Mammary epithelial cell (primary cell): ENCODE measurements at regions of chr9 and their contacts with region 1.

Region 1: GRCh38 chr9:130042833-130043653 is at the start of gene FNBP1:
- DNase-seq: peak; percentile 69
- H3K4me3 ChIP-seq: peak within 1 kb of the TSS; percentile 79 to 88 (median 86)
- H3K27ac ChIP-seq: peak within 1 kb of the TSS; percentile 34
- H3K4me1 ChIP-seq: peaks cover 4% of the 10 kb centered on the region
- H3K27me3 ChIP-seq: no peaks in the 10 kb centered on the region
- CTCF ChIP-seq: peak in 1 of 2 donors; percentile 8
- total RNA-seq, gene FNBP1: 11.5 to 21.5 TPM

Region 2: GRCh38 chr9:129962889-129963703 is 79.9 kb before region 1 on chr9:
- CTCF ChIA-PET with region 1: no interaction called
- dilution Hi-C with region 1: no loop called
- in situ Hi-C with region 1: no loop called
- intact Hi-C with region 1: loop called (anchors 2 kb)
- DNase-seq: peak; percentile 57
- H3K4me3 ChIP-seq: peak overlapping the region; percentile 53 to 81 (median 60)
- H3K27ac ChIP-seq: peak overlapping the region; percentile 74
- H3K4me1 ChIP-seq: peaks cover 11% of the 10 kb centered on the region
- H3K27me3 ChIP-seq: no peaks in the 10 kb centered on the region
- CTCF ChIP-seq: no peak

Region 3: GRCh38 chr9:129995409-129996160 is 47.5 kb before region 1 on chr9:
- CTCF ChIA-PET with region 1: no interaction called
- dilution Hi-C with region 1: no loop called
- in situ Hi-C with region 1: no loop called
- intact Hi-C with region 1: loop called (anchors 5 kb)
- DNase-seq: peak; percentile 76
- H3K4me3 ChIP-seq: no peak overlapping the region
- H3K27ac ChIP-seq: no peak overlapping the region
- H3K4me1 ChIP-seq: peaks cover 11% of the 10 kb centered on the region
- H3K27me3 ChIP-seq: no peaks in the 10 kb centered on the region
- CTCF ChIP-seq: no peak

Region 4: GRCh38 chr9:130382636-130383349 is 339.8 kb after region 1 on chr9:
- CTCF ChIA-PET with region 1: no interaction called
- dilution Hi-C with region 1: no loop called
- in situ Hi-C with region 1: no loop called
- intact Hi-C with region 1: no loop called
- DNase-seq: no peak
- H3K4me3 ChIP-seq: no peak overlapping the region
- H3K27ac ChIP-seq: no peak overlapping the region
- H3K4me1 ChIP-seq: no peaks in the 10 kb centered on the region
- H3K27me3 ChIP-seq: no peaks in the 10 kb centered on the region
- CTCF ChIP-seq: no peak

Region 5: DNA sequence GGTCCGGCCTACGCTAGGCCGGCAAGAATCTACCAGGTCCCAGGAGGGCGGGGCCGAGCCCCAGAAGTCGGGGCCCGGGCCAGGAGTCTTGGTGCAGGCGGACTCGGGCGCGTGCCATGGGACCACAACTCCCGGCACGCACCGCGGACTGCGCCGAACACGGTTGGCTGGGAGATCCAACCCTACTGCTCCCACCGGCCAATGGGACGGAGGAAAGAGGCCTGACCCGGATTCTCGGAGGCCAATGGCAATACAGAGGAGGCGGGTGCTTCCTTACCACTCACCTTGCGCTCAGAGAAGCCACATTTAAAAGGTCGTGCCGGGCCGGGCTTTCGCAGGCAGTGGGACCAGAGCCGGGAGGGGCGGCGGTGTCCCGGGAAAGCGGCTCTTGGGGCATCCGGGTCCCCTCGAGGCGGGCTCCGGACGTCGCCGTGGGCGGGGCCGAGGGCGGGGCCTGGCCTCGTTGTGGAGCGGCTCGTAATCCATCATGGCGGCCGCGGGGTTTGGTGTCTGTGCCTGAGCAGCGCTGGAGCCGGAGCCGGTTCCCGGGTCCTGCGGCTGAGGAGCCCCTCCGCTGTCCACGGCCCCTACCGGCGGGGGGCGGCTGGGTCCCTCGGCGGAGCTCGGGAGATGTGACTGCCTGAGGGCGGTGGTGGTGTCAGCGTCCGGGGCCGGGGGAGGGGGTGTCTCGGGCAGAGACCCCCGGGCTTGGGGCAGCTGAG is 669.7 kb after region 1 on chr9:
- CTCF ChIA-PET with region 1: no interaction called
- dilution Hi-C with region 1: no loop called
- in situ Hi-C with region 1: no loop called
- intact Hi-C with region 1: no loop called
- DNase-seq: peak; percentile 99
- H3K4me3 ChIP-seq: peak overlapping the region; percentile 85 to 96 (median 93)
- H3K27ac ChIP-seq: peak overlapping the region; percentile 85
- H3K4me1 ChIP-seq: peaks cover 23% of the 10 kb centered on the region
- H3K27me3 ChIP-seq: no peaks in the 10 kb centered on the region
- CTCF ChIP-seq: no peak